Dorsolateral prefrontal cortex (tissue), 120 donors: ENCODE measurements at regions of chr19 and their contacts with region 1.

Region 1: GRCh38 chr19:32373585-32374295 is 28.3 kb downstream of the ZNF507 start:
- DNase-seq: peak in 2 of 10 donors; percentile 18 to 23
- H3K4me3 ChIP-seq: peak overlapping the region in 1 of 59 donors; percentile 6
- H3K27ac ChIP-seq: peak overlapping the region in 53 of 59 donors; percentile 1 to 91 (median 66)
- H3K27me3 ChIP-seq: no peaks in the 10 kb centered on the region
- CTCF ChIP-seq: peak in 2 of 56 donors; percentile 10 to 18

Region 2: GRCh38 chr19:32339988-32340874 is 33.5 kb before region 1 on chr19:
- intact Hi-C with region 1: loop called in 1 of 2 experiments (anchors 5 kb)
- DNase-seq: peak in 9 of 10 donors; percentile 14 to 81 (median 66)
- H3K4me3 ChIP-seq: no peak overlapping the region
- H3K27ac ChIP-seq: peak overlapping the region in 2 of 59 donors; percentile 9 to 18
- H3K27me3 ChIP-seq: no peaks in the 10 kb centered on the region
- CTCF ChIP-seq: peak; percentile 24 to 82 (median 72)